WTC11 (cell line): ENCODE measurements at regions of chr15 and their contacts with region 1.

Region 1: DNA sequence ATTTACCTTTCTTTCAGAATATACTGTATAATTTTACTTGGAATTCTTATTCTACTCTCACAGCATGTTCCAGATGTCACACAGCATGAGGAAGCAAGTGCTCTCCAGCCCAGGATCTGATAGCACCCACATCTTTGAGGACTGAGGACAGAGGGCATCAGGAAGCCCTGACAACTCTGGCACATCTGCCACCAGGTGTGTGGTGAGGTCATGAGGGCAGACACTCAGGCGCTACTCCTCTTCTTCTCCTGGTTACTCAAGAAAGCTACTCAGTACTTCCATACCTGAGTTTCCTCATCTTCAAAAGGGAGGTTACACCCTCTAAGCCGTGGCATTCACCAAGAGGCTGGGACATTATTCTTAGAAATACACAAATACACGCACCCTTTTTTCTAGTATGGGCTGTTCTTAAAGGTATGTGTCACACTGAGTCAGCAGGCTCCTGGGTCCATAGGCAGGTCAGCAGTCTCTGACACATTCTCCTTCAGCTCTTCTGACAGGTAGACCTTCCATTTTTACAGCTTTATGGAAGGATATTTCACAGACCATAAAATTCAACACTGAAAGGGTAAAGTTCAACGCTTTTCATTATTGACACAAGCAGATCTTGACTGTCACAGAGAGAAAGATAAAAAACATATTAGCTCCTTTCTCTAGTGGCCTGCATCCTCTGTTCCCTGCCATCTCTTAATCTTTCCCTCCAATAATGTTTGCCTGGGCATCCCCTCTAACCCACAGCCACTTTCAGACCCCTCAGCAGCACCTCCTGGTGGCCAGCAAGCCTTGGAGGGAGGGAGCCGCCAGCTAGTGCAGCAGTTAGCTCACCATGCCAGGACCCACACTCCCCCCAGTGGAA is 103.2 kb upstream of the TJP1 start:
- DNase-seq: peak; percentile 91
- ATAC-seq: peak; percentile 72
- H3K4me3 Mint-ChIP-seq: no peak overlapping the region
- H3K27ac Mint-ChIP-seq: peak overlapping the region; percentile 96; the same call in 1 of the 2 replicates
- H3K4me1 Mint-ChIP-seq: peaks cover 39% of the 10 kb centered on the region
- H3K27me3 Mint-ChIP-seq: no peaks in the 10 kb centered on the region
- CTCF ChIP-seq: peak; percentile 74

Region 2: GRCh38 chr15:29613951-29614382 is 311.5 kb before region 1 on chr15:
- CTCF ChIA-PET with region 1: interaction called, 12 read pairs
- POLR2A ChIA-PET with region 1: no interaction called
- DNase-seq: peak; percentile 62
- ATAC-seq: peak; percentile 64
- H3K4me3 Mint-ChIP-seq: no peak overlapping the region
- H3K27ac Mint-ChIP-seq: no peak overlapping the region
- H3K4me1 Mint-ChIP-seq: peaks cover 38% of the 10 kb centered on the region
- H3K27me3 Mint-ChIP-seq: peaks cover 6% of the 10 kb centered on the region
- CTCF ChIP-seq: peak; percentile 52

Region 3: DNA sequence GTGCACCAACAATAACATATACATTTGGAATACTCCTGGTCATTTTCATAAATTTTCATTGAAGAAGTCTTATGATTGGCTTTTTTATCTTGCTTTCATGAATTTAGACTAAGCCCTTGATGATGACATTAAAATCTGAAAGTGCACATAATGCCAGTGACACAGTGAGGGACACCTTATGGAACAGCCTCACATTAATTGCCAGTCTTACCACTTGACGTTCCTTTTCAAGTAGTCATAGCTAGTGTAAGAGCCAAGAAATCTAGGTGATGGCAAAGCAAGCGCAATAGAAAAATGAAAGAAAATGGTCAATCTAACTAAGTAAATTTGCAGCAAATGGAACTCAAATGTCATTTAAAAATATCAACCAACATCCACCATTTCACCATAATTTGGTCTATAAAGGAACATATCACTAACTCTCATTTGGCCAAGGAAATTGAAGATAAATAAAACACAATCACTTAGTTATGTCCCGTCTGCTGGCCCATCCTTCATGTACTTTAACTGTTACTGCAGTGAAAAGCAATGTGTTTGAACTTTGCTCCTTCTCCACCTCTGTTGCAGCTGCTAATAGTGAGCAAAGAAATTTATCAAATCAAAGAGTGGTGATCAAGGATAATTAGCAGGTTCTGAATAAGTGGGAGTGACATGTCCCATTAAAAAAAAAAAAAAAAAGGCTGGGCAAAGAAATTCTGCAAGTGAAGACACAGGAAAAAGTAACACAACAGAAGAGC is 213.1 kb before region 1 on chr15:
- CTCF ChIA-PET with region 1: interaction called, 13 read pairs
- POLR2A ChIA-PET with region 1: no interaction called
- DNase-seq: no peak
- ATAC-seq: no peak
- H3K4me3 Mint-ChIP-seq: no peak overlapping the region
- H3K27ac Mint-ChIP-seq: no peak overlapping the region
- H3K4me1 Mint-ChIP-seq: no peaks in the 10 kb centered on the region
- H3K27me3 Mint-ChIP-seq: no peaks in the 10 kb centered on the region
- CTCF ChIP-seq: no peak

Region 4: DNA sequence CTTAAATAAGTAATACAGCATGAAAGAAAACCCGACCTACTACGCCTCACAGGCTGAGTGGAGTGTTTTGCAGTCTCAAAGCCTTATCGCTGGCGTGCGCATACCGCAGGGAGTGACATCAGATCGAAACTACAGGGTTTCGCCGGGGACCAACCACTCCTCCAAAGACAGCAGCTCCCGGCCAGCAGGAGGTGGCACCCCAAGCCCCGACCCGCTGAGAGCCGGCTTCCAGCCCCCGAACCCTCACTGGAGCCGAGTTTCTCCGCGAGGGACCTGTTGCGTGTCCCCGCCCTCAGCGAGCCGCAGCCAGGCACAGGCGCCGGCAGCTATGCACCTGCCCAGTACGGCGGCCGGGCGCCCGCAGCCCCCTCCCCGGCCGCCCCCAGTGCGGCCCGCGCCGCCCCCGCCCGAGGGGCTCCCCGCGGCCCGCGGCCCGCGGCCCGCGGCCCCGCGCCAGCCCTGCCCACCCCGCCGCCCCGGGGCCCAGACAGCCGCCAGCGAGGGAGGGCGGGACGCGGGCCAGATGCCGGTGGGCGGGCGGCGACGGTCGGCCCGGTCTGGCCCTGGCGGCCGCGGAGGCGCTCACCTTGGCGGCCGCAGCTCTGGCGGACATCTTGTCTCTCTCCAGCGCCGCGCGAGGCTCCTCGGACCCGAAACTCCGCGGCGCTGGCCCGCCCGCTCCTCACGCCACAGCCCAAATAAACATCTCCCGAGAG is 103.9 kb before region 1 on chr15:
- CTCF ChIA-PET with region 1: interaction called, 50 read pairs
- POLR2A ChIA-PET with region 1: interaction called, 33 read pairs
- DNase-seq: peak; percentile 86
- ATAC-seq: peak; percentile 68
- H3K4me3 Mint-ChIP-seq: peak overlapping the region; percentile 84
- H3K27ac Mint-ChIP-seq: peak overlapping the region; percentile 97
- H3K4me1 Mint-ChIP-seq: peaks cover 38% of the 10 kb centered on the region
- H3K27me3 Mint-ChIP-seq: peaks cover 12% of the 10 kb centered on the region
- CTCF ChIP-seq: no peak

Region 5: GRCh38 chr15:29864501-29864900 is 61.0 kb before region 1 on chr15:
- CTCF ChIA-PET with region 1: interaction called, 40 read pairs
- POLR2A ChIA-PET with region 1: interaction called, 3 read pairs
- DNase-seq: no peak
- ATAC-seq: no peak
- H3K4me3 Mint-ChIP-seq: no peak overlapping the region
- H3K27ac Mint-ChIP-seq: no peak overlapping the region
- H3K4me1 Mint-ChIP-seq: peaks cover 32% of the 10 kb centered on the region
- H3K27me3 Mint-ChIP-seq: no peaks in the 10 kb centered on the region
- CTCF ChIP-seq: no peak

Region 6: DNA sequence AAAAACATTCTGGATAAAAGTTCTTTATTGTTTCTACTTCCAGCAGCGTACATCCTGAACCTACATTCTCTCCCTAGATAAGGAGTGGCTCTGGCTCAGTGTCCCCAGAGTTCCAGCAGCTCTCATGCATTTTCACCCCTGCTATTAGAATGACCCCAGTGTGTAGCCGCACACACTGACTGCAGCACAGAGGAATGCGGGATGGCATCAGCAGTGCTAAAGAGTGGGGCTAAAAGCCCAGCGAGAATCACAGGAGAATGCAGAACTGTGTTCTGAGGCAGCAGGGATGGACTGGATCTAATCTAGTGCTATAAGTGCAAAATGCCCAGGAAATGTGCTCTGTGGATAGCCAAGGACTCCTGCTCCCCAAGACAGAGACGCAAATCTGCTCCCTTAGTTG is 36.8 kb before region 1 on chr15:
- CTCF ChIA-PET with region 1: interaction called, 61 read pairs
- POLR2A ChIA-PET with region 1: no interaction called
- DNase-seq: peak; percentile 33
- ATAC-seq: peak; percentile 86
- H3K4me3 Mint-ChIP-seq: peak overlapping the region; percentile 29; the same call in 1 of the 2 replicates
- H3K27ac Mint-ChIP-seq: peak overlapping the region; percentile 91
- H3K4me1 Mint-ChIP-seq: peaks cover 41% of the 10 kb centered on the region
- H3K27me3 Mint-ChIP-seq: no peaks in the 10 kb centered on the region; the same call in 1 of the 2 replicates
- CTCF ChIP-seq: no peak

Region 7: DNA sequence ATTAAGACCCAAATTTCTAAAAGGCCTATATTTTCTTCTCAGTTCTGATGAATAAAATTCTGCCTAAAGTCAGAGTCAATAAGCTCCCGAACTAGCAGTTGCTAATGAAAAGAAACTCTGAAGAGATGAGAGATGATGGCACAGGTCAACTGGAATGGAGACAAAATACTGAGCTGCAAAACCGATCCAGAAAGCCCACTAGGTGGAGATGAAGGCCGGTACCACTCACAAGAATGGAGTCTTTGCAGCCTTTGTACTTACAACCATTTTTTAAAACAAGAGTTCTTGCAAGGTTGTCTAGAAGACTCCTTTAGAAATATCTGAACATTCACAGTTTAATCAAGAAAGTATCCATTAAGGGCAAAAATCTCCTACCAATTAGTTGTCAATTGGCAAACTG is 16.7 kb after region 1 on chr15:
- CTCF ChIA-PET with region 1: interaction called, 29 read pairs
- POLR2A ChIA-PET with region 1: no interaction called
- DNase-seq: no peak
- ATAC-seq: peak; percentile 30; the same call in 1 of the 2 replicates
- H3K4me3 Mint-ChIP-seq: no peak overlapping the region
- H3K27ac Mint-ChIP-seq: no peak overlapping the region
- H3K4me1 Mint-ChIP-seq: no peaks in the 10 kb centered on the region
- H3K27me3 Mint-ChIP-seq: no peaks in the 10 kb centered on the region
- CTCF ChIP-seq: no peak